Colonic mucosa (tissue), 4 donors: ENCODE measurements at regions of chr7 and their contacts with region 1.

Region 1: GRCh38 chr7:24665564-24666294 is 91.5 kb downstream of the GSDME start:
- DNase-seq: peak; percentile 48
- H3K4me3 ChIP-seq: no peak overlapping the region
- H3K27ac ChIP-seq: no peak overlapping the region
- H3K4me1 ChIP-seq: no peaks in the 10 kb centered on the region
- H3K27me3 ChIP-seq: no peaks in the 10 kb centered on the region
- CTCF ChIP-seq: peak; percentile 52

Region 2: GRCh38 chr7:23570592-23571200 is 1095.0 kb before region 1 on chr7:
- intact Hi-C with region 1: loop called (anchors 10 kb)
- DNase-seq: peak; percentile 80
- H3K4me3 ChIP-seq: no peak overlapping the region
- H3K27ac ChIP-seq: no peak overlapping the region
- H3K4me1 ChIP-seq: no peaks in the 10 kb centered on the region
- H3K27me3 ChIP-seq: no peaks in the 10 kb centered on the region
- CTCF ChIP-seq: peak; percentile 77

Region 3: GRCh38 chr7:24290004-24290641 is 375.6 kb before region 1 on chr7:
- intact Hi-C with region 1: loop called (anchors 5 kb)
- DNase-seq: peak; percentile 21
- H3K4me3 ChIP-seq: no peak overlapping the region
- H3K27ac ChIP-seq: no peak overlapping the region
- H3K4me1 ChIP-seq: no peaks in the 10 kb centered on the region
- H3K27me3 ChIP-seq: peaks cover 6% of the 10 kb centered on the region
- CTCF ChIP-seq: no peak

Region 4: DNA sequence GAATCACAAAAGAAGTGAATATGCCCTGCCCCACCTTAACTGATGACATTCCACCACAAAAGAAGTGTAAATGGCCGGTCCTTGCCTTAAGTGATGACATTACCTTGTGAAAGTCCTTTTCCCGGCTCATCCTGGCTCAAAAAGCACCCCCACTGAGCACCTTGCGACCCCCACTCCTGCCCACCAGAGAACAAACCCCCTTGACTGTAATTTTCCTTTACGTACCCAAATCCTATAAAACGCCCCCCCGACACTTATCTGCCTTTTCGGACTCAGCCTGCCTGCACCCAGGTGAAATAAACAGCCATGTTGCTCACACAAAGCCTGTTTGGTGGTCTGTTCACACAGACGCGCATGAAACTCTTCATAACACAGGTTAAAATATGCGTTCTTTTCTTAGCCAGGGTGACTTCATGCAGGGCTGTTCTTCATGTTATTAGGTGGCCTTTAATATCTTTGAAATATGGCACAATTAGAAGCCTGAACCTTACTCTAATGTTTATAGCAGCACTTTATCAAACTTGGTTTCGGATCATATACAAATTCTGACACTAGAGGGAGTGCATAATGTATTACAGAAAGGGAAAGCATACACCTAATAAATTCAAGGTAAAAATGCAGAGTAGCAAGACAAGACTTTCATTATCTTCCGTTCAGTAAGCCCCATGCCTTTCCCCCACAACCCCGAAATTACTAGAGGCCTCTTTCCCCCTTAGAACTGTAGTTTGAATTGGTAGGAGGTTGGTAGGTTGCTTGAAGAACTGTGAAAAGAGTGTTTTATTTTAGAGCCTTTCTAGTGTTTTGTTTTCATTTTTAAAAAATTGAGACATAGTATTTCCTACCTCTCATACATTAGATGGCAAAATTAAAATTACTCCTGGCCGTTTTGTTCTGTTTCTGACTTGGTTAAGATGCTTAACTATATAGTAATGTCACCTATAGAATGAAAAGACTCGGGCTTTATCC is 263.8 kb before region 1 on chr7:
- intact Hi-C with region 1: loop called (anchors 5 kb)
- DNase-seq: no peak
- H3K4me3 ChIP-seq: no peak overlapping the region
- H3K27ac ChIP-seq: no peak overlapping the region
- H3K4me1 ChIP-seq: no peaks in the 10 kb centered on the region
- H3K27me3 ChIP-seq: no peaks in the 10 kb centered on the region
- CTCF ChIP-seq: no peak